CD4-positive, alpha-beta memory T cell (primary cell): ENCODE measurements at regions of chr6 and their contacts with region 1.

Region 1: DNA sequence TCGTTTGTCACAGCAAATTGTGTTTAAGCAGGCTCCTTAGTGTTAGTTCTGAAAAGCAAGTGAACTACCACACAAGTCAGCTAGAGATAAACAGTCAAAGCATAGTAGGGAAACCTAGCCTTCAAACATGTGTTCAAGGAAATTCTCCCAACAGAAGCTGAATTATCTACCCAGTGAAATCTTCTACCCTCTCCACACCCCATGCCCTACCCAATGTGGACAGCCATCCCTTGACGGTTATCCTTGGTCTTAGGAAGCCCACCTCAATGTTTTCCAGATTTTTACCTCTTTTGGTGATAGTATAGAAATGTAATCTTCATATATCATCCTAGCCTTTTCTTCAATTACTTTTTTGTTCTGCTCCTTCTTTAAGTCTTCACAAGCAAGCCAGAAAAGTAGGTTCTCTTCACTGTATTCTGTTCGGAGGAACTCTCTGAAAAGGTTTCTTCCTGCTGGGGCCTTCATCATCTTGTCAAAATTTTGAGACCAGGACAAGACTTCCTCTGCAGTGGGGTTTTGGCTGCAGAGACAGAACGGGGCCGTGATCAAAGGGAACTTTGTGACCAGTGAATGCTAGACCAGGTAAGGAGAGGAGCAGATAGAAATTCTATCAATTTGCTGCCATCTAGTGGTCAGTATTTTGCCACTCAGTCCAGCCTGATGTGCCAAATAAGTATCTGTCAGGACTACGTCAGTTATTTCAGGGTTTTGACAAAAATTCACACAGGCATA is 21.6 kb upstream of the MTRF1L start:
- DNase-seq: peak; percentile 40 to 61 (median 48)
- H3K4me3 ChIP-seq: no peak overlapping the region
- H3K4me3 Mint-ChIP-seq: no peak overlapping the region
- H3K27ac ChIP-seq: no peak overlapping the region
- H3K27ac Mint-ChIP-seq: no peak overlapping the region
- H3K4me1 ChIP-seq: no peaks in the 10 kb centered on the region
- H3K4me1 Mint-ChIP-seq: peaks cover 0 to 5% (median 1%) of the 10 kb centered on the region in 4 donors
- H3K27me3 ChIP-seq: no peaks in the 10 kb centered on the region
- H3K27me3 Mint-ChIP-seq: peaks cover 13 to 19% of the 10 kb centered on the region in 2 donors

Region 2: DNA sequence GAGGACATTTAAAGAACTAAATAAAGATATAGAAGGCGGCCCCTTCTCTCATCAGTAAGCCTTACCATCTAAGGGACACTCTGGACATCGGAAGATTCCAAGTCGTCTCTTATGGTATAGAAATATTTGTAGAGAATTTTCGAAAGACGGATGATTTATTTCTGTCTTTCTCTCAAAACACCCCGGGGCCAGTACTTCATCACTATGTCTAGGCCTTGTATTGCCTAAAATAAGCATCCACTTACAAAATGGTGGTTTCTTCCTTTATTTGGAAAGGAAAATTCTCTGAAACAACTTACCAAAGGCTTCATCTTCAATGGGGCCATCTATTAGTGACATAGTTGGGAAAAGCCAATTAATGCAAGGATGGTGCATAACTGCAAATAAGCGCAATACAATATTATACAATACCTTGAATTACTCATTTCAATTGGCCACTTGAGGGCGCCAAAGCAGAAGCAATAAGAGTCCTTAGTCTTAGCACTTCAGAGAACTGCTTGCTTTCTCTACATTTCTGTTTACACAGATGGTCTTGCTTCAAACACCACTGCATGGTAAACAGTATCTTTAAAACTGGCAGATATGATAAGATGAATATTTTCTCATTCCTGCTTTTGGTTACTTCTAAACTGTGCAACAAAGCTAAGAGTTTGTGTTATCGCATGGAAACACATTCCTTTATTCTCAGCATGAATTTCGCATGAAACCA is 160.4 kb before region 1 on chr6:
- CTCF ChIA-PET with region 1: interaction called, 43 read pairs
- POLR2A ChIA-PET with region 1: no interaction called
- intact Hi-C with region 1: loop called (anchors 1 kb)
- DNase-seq: peak; percentile 48 to 64 (median 57)
- H3K4me3 ChIP-seq: no peak overlapping the region
- H3K4me3 Mint-ChIP-seq: no peak overlapping the region
- H3K27ac ChIP-seq: no peak overlapping the region
- H3K27ac Mint-ChIP-seq: no peak overlapping the region
- H3K4me1 ChIP-seq: no peaks in the 10 kb centered on the region
- H3K4me1 Mint-ChIP-seq: peaks cover 0 to 3% (median 1%) of the 10 kb centered on the region in 4 donors
- H3K27me3 ChIP-seq: no peaks in the 10 kb centered on the region
- H3K27me3 Mint-ChIP-seq: peaks cover 2 to 11% of the 10 kb centered on the region in 2 donors